ENCODE measurements at regions of chr1 and their contacts with region 1.

Region 1: DNA sequence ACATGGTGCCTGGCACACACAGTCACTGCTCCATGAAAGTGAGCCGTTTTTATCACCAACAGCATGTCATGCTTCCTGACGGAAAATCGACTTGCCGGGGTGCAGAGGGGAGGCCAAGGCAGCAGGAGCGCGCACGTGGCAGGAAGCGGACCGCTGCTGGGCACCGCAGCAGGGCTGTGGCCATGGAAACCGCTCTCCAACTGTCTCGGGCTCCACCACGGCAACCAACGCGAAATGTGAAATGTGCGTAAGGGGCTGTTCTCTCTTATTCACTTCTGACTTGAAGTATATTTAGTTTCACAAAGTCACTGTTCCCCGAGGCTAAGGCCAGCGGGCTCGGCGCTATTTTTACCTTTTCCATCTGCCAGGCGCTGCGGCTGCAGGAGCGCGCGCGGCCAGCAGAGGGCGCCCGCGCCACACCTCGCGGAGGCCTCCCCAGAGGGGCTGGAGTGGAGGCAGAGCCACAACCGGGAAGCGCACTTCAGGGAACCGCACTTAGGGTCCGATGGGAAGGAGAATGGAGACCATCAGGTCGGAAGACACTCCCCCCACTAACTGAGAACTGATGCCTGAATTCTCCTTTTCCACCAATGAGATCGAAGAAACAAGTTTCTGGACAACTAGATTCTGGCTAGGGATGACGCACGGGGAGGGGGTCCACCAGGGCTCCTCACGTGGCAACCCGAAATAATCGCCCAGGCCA is 19.7 kb downstream of the RCC2 start:
- DNase-seq: peak; percentile 76 to 79
- ATAC-seq: peak; percentile 80 to 97 (median 90)
- H3K4me3 ChIP-seq: no peak overlapping the region
- H3K4me3 Mint-ChIP-seq: no peak overlapping the region
- H3K27ac ChIP-seq: no peak overlapping the region
- H3K27ac Mint-ChIP-seq: no peak overlapping the region
- H3K4me1 ChIP-seq: no peaks in the 10 kb centered on the region
- H3K4me1 Mint-ChIP-seq: peaks cover 13% of the 10 kb centered on the region in 2 donors
- H3K27me3 ChIP-seq: no peaks in the 10 kb centered on the region
- H3K27me3 Mint-ChIP-seq: no peaks in the 10 kb centered on the region
- CTCF ChIP-seq: peak; percentile 99

Region 2: DNA sequence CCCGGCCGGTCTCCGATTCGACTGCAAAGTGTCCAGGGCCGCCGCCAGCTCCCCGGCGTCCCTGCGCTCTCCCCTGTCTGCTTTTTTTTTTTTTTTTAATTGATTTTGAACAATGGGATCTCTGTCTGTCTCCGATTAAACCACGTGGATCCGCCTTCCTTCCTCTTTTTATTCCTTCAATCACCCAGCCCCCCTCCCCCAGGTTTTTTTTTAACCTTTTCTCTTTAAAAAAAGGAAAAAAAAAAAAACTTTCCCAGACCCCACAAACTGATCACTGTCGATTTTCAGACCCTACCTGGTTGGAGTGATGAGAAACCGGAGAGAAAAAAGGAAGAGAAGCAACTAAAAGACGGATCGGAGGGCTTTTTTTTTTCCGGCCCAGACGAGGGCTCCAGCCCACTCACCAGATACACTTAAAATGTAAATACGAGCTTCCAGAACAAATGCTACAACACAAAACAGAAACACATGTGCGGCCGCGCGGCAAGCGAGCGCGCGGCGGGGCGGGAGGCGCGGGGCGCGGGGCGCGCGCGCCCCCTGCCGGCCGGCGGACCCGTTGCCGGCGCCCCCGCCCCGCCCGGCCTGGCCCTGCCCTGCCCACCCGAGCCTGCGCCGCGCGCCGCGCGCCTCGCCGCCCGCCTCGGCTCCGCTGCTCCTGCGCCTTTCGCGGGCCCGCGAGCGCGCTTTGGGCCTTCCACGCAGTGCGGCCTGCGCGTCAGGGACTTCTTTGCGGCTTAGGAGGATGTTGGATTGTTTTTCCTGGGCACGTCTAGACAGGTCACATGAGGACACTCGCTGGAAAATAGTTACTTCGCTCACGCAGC is 19.7 kb after region 1 on chr1 and contains the start of gene RCC2:
- intact Hi-C with region 1: loop called (anchors 1 kb)
- DNase-seq: peak; percentile 61 to 90
- ATAC-seq: peak; percentile 76 to 89 (median 80)
- H3K4me3 ChIP-seq: peak within 1 kb of the TSS; percentile 87
- H3K4me3 Mint-ChIP-seq: peak within 1 kb of the TSS; percentile 96
- H3K27ac ChIP-seq: peak within 1 kb of the TSS; percentile 73
- H3K27ac Mint-ChIP-seq: peak within 1 kb of the TSS; percentile 85 to 91
- H3K4me1 ChIP-seq: peaks cover 38% of the 10 kb centered on the region
- H3K4me1 Mint-ChIP-seq: peaks cover 21 to 39% of the 10 kb centered on the region in 2 donors
- H3K27me3 ChIP-seq: no peaks in the 10 kb centered on the region
- H3K27me3 Mint-ChIP-seq: peaks cover 7 to 22% of the 10 kb centered on the region in 2 donors
- CTCF ChIP-seq: no peak
- total RNA-seq, gene RCC2: 55.2 to 76.8 (median 73.2) TPM

Region 3: DNA sequence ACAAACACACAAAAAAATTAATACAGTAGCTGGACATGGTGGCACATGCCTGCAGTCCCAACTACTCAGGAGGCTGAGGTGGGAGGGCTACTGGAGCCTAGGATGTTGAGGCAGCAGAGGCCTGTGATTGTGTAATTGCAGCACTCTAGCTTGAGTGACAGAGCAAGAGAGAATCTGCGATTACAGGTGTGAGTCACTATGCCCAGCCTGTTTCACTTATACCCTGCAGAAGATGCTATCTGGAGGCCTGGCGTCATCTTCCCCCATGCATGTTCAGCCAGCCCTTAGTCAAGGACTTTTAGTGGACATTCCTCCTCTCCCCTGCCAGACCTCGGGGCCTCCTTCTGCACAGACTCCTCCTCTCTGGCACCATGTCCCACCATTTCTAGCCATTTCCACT is 56.0 kb after region 1 on chr1:
- intact Hi-C with region 1: loop called (anchors 5 kb)
- DNase-seq: no peak
- ATAC-seq: no peak
- H3K4me3 ChIP-seq: no peak overlapping the region
- H3K4me3 Mint-ChIP-seq: no peak overlapping the region
- H3K27ac ChIP-seq: no peak overlapping the region
- H3K27ac Mint-ChIP-seq: no peak overlapping the region
- H3K4me1 ChIP-seq: no peaks in the 10 kb centered on the region
- H3K4me1 Mint-ChIP-seq: no peaks in the 10 kb centered on the region
- H3K27me3 ChIP-seq: no peaks in the 10 kb centered on the region
- H3K27me3 Mint-ChIP-seq: no peaks in the 10 kb centered on the region
- CTCF ChIP-seq: no peak

Measured in natural killer cell (primary cell).